ENCODE measurements at regions of chr3 and their contacts with region 1.

Region 1: GRCh38 chr3:44761424-44762169 is at the starts of genes KIAA1143 and KIF15:
- DNase-seq: peak; percentile 98 to 99
- ATAC-seq: peak; percentile 100
- H3K4me3 ChIP-seq: peak within 1 kb of the TSS; percentile 73 to 84
- H3K27ac ChIP-seq: no peak within 1 kb of the TSS
- H3K4me1 ChIP-seq: no peaks in the 10 kb centered on the region
- H3K27me3 ChIP-seq: no peaks in the 10 kb centered on the region
- total RNA-seq, gene KIAA1143: 21.3 to 33.0 TPM
- total RNA-seq, gene KIF15: 0.49 to 0.93 TPM

Region 2: DNA sequence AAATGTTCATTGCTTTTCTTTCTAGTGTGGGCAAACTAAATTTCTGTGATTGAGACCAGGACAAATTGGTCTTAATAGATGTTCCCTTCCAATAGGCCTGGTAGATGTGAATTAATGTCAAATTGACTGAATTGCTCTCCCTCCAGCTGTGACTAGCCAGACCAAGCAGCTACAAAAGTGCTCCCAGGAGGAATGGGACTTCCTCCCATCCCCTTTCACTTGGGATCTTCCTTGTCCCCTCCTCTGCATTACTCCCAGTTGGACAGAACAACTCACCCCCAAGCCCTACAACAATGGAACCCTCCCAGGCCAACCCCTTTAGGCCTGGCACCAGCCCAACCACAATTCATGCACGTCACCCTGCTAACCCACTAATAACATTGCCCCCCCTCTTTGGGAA is 226.2 kb before region 1 on chr3:
- intact Hi-C with region 1: loop called in 1 of 2 experiments (anchors 5 kb)
- DNase-seq: no peak
- ATAC-seq: no peak
- H3K4me3 ChIP-seq: no peak overlapping the region
- H3K27ac ChIP-seq: no peak overlapping the region
- H3K4me1 ChIP-seq: no peaks in the 10 kb centered on the region
- H3K27me3 ChIP-seq: peaks cover 1 to 5% of the 10 kb centered on the region in 2 donors

Region 3: GRCh38 chr3:44648564-44649229 is 112.9 kb before region 1 on chr3 and contains the start of gene ZNF35:
- intact Hi-C with region 1: loop called in 1 of 2 experiments (anchors 5 kb)
- DNase-seq: peak; percentile 85 to 90
- ATAC-seq: peak; percentile 94
- H3K4me3 ChIP-seq: peak within 1 kb of the TSS; percentile 61 to 87
- H3K27ac ChIP-seq: peak within 1 kb of the TSS in 1 of 2 donors; percentile 19
- H3K4me1 ChIP-seq: peaks cover 0 to 2% of the 10 kb centered on the region in 2 donors
- H3K27me3 ChIP-seq: no peaks in the 10 kb centered on the region
- total RNA-seq, gene ZNF35: 7.8 to 12.8 TPM

Region 4: GRCh38 chr3:44712455-44713075 is 49.0 kb before region 1 on chr3 and contains the start of gene ZNF502:
- intact Hi-C with region 1: loop called in 1 of 2 experiments (anchors 5 kb)
- DNase-seq: peak; percentile 91 to 97
- ATAC-seq: peak; percentile 96
- H3K4me3 ChIP-seq: peak within 1 kb of the TSS; percentile 24 to 81
- H3K27ac ChIP-seq: peak within 1 kb of the TSS in 1 of 2 donors; percentile 13
- H3K4me1 ChIP-seq: peaks cover 0 to 5% of the 10 kb centered on the region in 2 donors
- H3K27me3 ChIP-seq: no peaks in the 10 kb centered on the region
- total RNA-seq, gene ZNF502: 5.1 to 5.9 TPM

Region 5: GRCh38 chr3:44729384-44729910 is 32.1 kb before region 1 on chr3 and contains the start of gene ZNF501:
- intact Hi-C with region 1: loop called in 1 of 2 experiments (anchors 2 kb)
- DNase-seq: peak; percentile 96 to 98
- ATAC-seq: peak; percentile 98
- H3K4me3 ChIP-seq: peak within 1 kb of the TSS; percentile 76 to 89
- H3K27ac ChIP-seq: no peak within 1 kb of the TSS
- H3K4me1 ChIP-seq: no peaks in the 10 kb centered on the region
- H3K27me3 ChIP-seq: no peaks in the 10 kb centered on the region
- total RNA-seq, gene ZNF501: 4.6 to 7.3 TPM

Region 6: DNA sequence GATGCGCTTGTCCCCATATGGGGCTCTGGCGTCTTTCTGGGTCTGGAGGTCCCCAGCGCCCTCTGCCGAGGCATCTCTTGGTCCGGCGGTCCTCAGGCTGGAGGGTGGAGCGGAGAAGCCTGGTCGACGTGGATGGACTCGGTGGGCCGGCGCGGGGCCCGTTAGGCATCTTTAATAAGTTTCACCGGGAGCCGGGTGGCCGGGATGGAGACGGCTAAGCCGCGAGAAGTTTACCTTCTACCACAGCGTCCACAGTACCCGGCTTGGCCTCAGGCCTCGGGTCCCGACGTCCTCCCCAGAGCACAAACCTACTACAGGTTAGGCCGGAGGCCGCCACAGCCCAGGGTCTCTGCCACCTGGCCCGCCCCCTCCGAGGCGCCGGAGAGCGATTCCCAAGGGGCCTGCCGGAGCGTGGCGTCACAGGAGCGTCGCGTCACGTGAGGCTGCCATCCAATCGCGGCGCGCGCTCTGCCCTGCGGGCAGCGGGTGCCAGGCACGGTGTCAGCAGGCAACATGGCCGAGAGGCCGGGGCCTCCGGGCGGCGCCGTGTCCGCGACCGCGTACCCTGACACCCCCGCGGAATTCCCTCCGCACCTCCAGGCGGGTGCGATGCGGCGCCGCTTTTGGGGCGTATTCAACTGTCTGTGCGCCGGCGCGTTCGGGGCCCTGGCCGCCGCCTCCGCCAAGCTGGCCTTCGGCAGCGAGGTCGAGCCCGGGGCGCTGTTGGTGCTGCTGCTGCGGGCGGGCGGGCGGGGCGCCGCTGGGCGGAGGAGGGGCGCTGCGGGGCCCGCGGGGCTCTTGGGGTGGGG is 100.0 kb after region 1 on chr3 and contains the start of gene TMEM42:
- intact Hi-C with region 1: loop called (anchors 1 kb)
- DNase-seq: peak; percentile 93 to 97
- ATAC-seq: peak; percentile 100
- H3K4me3 ChIP-seq: peak within 1 kb of the TSS; percentile 63 to 90
- H3K27ac ChIP-seq: peak within 1 kb of the TSS; percentile 53 to 83
- H3K4me1 ChIP-seq: no peaks in the 10 kb centered on the region
- H3K27me3 ChIP-seq: no peaks in the 10 kb centered on the region
- total RNA-seq, gene TMEM42: 7.9 to 10.6 TPM

Region 7: DNA sequence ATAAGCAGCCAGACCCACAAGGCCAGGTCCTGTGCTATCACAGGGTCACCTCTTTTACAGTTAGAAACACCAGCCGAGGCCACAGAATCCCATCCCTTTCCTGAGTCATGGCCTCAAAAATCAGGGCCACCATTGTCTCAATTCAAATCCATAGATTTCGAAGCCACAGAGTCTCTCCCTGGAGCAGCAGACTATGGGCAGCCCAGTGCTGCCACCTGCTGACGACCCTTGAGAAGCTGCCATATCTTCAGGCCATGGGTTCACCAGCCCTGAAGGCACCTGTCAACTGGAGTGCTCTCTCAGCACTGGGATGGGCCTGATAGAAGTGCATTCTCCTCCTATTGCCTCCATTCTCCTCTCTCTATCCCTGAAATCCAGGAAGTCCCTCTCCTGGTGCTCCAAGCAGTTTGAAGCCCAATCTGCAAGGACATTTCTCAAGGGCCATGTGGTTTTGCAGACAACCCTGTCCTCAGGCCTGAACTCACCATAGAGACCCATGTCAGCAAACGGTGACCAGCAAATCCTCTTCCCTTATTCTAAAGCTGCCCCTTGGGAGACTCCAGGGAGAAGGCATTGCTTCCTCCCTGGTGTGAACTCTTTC is 152.4 kb after region 1 on chr3:
- intact Hi-C with region 1: loop called (anchors 5 to 10 kb)
- DNase-seq: peak; percentile 72 to 88
- ATAC-seq: peak; percentile 65
- H3K4me3 ChIP-seq: no peak overlapping the region
- H3K27ac ChIP-seq: no peak overlapping the region
- H3K4me1 ChIP-seq: no peaks in the 10 kb centered on the region
- H3K27me3 ChIP-seq: no peaks in the 10 kb centered on the region